GM10248 (cell line): ENCODE measurements at regions of chr2 and their contacts with region 1.

Region 1: DNA sequence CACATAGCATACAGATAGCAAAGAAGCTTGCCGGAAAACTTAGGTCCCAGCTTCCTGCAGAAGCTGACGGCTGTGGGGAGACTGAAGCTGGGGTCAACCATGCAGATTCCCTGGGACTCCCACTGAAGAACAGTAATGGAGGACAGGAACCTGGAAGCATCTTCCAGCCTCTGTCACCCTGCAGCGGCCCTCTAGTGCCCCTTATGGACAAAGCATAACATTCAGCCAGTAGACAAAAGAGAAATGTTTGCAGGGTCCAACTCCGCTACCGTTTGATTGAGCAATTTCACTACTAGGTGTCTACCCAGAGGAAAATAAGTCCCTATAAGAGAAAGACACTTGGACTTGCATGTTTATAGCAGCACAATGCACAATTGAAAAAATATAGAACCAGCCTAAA is 460.6 kb downstream of the CNTNAP5 start:
- DNase-seq: no peak
- CTCF ChIP-seq: no peak

Region 2: GRCh38 chr2:124501575-124502152 is 16.0 kb after region 1 on chr2:
- CTCF ChIA-PET with region 1: interaction called, 16 read pairs
- POLR2A ChIA-PET with region 1: no interaction called
- DNase-seq: no peak
- CTCF ChIP-seq: no peak

Region 3: GRCh38 chr2:124542932-124543640 is 57.4 kb after region 1 on chr2:
- CTCF ChIA-PET with region 1: no interaction called
- POLR2A ChIA-PET with region 1: no interaction called
- DNase-seq: no peak
- CTCF ChIP-seq: no peak

Region 4: DNA sequence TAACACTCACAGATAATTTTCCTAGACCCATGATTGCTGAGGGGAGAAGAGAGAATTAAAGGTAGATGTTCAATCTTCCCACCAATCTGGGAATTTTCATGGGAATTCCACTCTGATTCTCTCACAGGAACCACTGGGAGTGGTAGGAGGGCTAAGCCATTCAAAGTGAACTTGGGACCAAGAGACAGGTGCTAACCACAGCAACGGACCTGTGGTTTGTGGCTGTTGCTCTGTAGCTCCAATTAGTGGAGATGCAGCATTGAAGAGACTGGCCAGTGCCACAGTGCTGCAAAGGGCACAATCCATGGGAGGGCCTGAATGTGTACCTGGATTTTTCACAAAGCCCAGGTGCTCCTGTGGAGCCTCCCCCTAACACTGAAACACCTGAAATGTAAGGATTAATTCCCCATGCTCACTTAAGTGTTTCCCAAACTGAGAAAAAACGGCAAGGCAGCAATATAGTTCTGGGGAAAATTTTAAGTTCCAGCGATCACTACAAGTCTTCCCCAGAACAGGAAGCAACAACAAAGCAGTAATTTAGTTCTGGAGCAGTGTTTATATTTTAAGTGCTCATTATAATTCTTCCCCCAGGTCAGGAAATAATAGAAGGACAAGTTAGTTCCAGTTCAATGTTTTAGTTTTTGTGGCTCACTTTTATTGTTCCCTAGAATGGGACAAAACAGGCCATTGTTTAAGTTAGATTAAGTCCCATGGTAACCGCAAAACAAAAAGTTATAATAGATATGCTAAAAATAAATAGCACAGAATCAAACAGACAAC is 585.3 kb after region 1 on chr2:
- CTCF ChIA-PET with region 1: no interaction called
- POLR2A ChIA-PET with region 1: no interaction called
- DNase-seq: no peak
- CTCF ChIP-seq: no peak